ENCODE measurements at regions of chr5 and their contacts with region 1.

Region 1: GRCh38 chr5:159331093-159331973 is 1.0 kb upstream of the IL12B start:
- DNase-seq: peak; percentile 72
- ATAC-seq: peak; percentile 48
- H3K4me3 Mint-ChIP-seq: peak overlapping the region; percentile 80
- H3K27ac Mint-ChIP-seq: peak overlapping the region; percentile 90
- H3K4me1 Mint-ChIP-seq: peaks cover 61% of the 10 kb centered on the region
- H3K27me3 Mint-ChIP-seq: no peaks in the 10 kb centered on the region
- CTCF ChIP-seq: no peak

Region 2: DNA sequence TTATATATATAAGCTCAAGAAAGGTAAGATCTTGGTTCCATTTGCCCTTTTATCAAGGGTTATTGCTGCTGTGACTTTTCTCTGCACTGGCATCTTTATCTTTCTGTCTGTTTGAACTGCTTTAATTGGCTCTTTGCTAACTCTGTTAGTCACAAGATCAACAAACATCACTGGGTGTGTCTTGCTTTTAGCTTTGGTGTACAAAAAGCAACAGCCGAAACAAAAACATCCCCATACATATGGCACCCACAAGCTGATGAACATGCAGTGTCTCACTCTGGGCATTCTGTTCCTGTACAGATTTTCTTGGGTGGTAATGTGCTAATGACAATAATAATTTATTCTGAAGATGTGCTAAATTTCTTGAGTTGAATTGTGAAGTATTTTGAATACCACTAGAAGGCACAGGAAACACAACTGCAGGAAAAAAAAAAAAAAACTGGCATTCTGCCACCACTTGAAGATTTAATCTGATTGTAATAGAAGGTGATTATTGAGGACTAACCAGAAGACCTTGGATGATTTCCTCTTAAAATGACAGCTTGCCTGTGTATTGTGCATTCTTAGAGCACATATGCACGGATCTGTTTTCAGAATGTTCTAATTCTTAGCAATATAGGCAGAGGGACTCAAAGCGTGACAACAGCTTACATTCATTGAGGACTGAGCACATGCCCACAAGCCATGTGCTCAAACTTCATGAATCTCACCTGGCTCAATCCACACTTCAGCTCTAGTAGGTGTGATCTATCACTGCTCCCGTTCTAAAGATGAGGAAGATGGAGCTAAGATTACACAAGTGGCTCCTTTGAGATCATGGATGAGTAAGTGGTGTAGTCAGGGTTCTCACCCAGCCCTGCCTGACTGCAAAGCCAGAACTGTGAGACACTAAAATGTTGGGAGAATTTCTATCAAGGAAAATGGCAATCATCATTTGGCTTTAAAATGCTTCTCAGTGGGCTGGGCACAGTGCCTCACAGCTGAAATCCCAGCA is 328.0 kb before region 1 on chr5:
- CTCF ChIA-PET with region 1: no interaction called
- POLR2A ChIA-PET with region 1: no interaction called
- intact Hi-C with region 1: no loop called
- DNase-seq: no peak
- ATAC-seq: no peak
- H3K4me3 Mint-ChIP-seq: peak overlapping the region; percentile 12
- H3K27ac Mint-ChIP-seq: peak overlapping the region; percentile 59
- H3K4me1 Mint-ChIP-seq: peaks cover 79% of the 10 kb centered on the region
- H3K27me3 Mint-ChIP-seq: no peaks in the 10 kb centered on the region
- CTCF ChIP-seq: no peak

Region 3: GRCh38 chr5:159209438-159210305 is 121.7 kb before region 1 on chr5 and contains the start of gene RNF145:
- CTCF ChIA-PET with region 1: no interaction called
- POLR2A ChIA-PET with region 1: no interaction called
- intact Hi-C with region 1: loop called (anchors 5 kb)
- DNase-seq: peak; percentile 93
- ATAC-seq: peak; percentile 79
- H3K4me3 Mint-ChIP-seq: peak within 1 kb of the TSS; percentile 97
- H3K27ac Mint-ChIP-seq: peak within 1 kb of the TSS; percentile 96
- H3K4me1 Mint-ChIP-seq: peaks cover 57% of the 10 kb centered on the region
- H3K27me3 Mint-ChIP-seq: no peaks in the 10 kb centered on the region
- CTCF ChIP-seq: no peak
- total RNA-seq, gene RNF145: 66.1 and 79.1 TPM in 2 replicates

Region 4: DNA sequence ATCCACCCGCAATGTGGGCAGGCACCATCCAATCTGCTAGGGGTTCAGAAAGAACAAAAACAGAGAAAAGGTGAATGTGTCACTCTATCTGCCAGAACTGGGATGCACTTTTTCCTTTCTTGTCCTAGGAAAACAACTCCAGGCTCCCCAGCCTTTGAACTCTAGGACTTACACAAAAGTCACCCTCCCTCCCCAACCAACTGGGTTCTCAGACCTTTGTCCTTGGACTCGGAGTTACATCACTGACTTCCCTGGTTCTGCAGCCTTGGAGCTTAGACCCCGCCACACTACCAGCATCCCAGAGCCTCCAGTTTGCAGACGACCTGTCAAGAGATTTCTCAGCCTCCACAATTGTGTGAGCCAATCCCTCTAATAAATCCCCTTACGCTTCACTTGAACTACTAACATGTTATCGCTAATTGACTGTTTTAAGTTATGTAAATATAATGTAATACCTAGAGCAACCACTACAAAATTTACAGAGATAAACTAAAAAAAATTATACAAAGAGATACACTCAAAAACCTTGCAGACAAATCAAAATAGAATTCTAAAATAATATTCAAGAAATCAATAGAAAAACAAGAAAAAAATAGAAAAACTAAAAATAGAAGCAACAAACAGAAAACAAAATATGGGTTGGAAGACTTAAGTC is 73.6 kb before region 1 on chr5:
- CTCF ChIA-PET with region 1: no interaction called
- POLR2A ChIA-PET with region 1: no interaction called
- intact Hi-C with region 1: no loop called
- DNase-seq: no peak
- ATAC-seq: no peak
- H3K4me3 Mint-ChIP-seq: no peak overlapping the region
- H3K27ac Mint-ChIP-seq: no peak overlapping the region
- H3K4me1 Mint-ChIP-seq: peaks cover 11% of the 10 kb centered on the region
- H3K27me3 Mint-ChIP-seq: peaks cover 14% of the 10 kb centered on the region
- CTCF ChIP-seq: no peak

Region 5: DNA sequence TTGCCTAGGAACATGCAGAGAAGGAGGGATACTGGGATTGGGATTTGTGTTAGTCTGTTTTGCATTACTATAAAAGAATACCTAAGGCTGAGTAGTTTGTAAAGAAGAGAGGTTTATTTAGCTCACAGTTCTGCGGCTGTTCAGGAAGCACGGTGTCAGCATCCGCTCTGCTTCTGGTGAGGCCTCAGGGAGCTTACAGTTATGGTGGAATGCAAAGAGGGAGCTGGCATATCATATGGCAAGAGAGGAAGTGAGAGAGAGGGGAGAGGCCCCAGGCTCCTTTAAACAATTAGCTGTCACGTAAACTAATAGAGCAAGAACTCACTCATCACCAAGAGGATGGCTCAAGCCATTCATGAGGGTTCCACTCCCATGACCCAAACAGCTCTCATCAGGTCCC is 28.0 kb before region 1 on chr5:
- CTCF ChIA-PET with region 1: interaction called, 3 read pairs
- POLR2A ChIA-PET with region 1: no interaction called
- intact Hi-C with region 1: loop called (anchors 2 kb)
- DNase-seq: no peak
- ATAC-seq: no peak
- H3K4me3 Mint-ChIP-seq: no peak overlapping the region
- H3K27ac Mint-ChIP-seq: no peak overlapping the region
- H3K4me1 Mint-ChIP-seq: peaks cover 18% of the 10 kb centered on the region
- H3K27me3 Mint-ChIP-seq: no peaks in the 10 kb centered on the region
- CTCF ChIP-seq: no peak

Region 6: DNA sequence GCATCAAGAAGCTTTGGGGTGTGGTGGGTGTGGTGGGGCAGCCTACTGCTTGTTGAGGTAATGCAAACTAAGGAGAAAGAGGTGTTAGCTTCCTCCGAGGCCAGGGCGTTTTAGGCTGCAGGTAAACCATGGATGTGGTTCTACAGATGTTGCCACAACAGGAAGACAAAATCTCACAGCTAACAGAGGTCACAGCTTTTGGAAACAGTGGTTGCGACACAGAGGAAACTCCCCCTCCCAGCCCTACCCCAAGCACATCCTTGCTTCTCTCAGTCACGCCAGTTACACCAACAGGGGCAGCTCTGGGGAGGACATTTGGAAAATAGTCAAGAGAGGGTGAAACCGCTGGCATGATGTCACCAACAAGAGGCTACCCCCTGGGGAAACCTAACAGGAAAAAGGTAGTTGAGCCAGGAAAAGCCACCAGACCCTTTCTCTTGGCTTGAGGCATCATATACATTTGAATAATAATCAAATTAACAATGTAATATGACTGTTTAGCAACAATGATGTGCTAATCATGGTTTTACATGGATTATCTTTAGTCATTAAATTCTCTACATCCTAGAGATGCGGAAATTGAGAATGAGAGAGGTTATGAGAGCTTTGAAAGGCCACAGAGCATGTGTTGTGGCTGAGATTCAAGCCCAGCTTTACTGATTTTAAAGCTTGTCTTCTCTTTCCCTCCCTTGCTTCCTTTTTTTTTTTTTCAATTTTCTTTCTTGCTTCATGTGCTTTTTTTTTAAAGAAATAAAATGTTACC is 81.1 kb after region 1 on chr5:
- CTCF ChIA-PET with region 1: interaction called, 3 read pairs
- POLR2A ChIA-PET with region 1: interaction called, 8 read pairs
- intact Hi-C with region 1: loop called (anchors 1 kb)
- DNase-seq: no peak
- ATAC-seq: peak; percentile 72
- H3K4me3 Mint-ChIP-seq: no peak overlapping the region
- H3K27ac Mint-ChIP-seq: peak overlapping the region; percentile 84
- H3K4me1 Mint-ChIP-seq: peaks cover 50% of the 10 kb centered on the region
- H3K27me3 Mint-ChIP-seq: no peaks in the 10 kb centered on the region
- CTCF ChIP-seq: no peak

Region 7: DNA sequence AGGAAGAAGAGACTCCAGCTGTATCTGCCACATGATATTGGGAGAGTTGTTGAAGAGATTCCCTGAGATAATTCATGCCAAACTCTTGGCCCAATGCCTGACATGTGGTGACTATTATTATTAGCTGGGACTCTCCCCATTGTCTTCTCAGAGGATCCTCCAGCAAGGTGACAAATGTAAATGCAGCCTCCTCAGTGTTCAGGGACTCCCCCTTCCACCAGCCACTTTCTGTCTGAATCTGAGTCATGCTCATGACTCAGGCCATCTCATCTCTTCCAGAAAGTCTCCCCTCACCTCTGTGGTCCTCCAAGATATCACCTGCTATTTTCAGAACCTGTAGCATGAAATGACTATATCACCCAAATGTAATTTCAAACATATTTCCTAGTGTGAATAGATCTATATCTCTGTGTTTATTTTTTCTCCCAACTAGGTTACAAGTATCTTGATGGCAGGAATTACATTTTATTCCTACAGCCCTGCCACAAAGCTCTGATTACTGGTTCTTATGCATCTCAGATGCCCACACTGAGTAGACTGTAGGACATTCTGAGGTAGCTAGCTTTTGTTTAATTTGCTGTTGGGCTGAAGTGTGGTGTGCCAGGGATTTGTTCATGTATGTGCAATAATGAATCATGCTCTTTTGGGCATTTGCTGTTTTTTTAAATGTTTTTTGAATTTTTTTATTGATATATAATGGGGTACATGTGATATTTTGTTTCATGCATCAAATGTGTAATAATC is 125.6 kb after region 1 on chr5:
- CTCF ChIA-PET with region 1: interaction called, 7 read pairs
- POLR2A ChIA-PET with region 1: interaction called, 7 read pairs
- intact Hi-C with region 1: loop called (anchors 1 kb)
- DNase-seq: no peak
- ATAC-seq: peak; percentile 66
- H3K4me3 Mint-ChIP-seq: peak overlapping the region; percentile 35
- H3K27ac Mint-ChIP-seq: peak overlapping the region; percentile 76
- H3K4me1 Mint-ChIP-seq: peaks cover 72% of the 10 kb centered on the region
- H3K27me3 Mint-ChIP-seq: no peaks in the 10 kb centered on the region
- CTCF ChIP-seq: no peak

Region 8: DNA sequence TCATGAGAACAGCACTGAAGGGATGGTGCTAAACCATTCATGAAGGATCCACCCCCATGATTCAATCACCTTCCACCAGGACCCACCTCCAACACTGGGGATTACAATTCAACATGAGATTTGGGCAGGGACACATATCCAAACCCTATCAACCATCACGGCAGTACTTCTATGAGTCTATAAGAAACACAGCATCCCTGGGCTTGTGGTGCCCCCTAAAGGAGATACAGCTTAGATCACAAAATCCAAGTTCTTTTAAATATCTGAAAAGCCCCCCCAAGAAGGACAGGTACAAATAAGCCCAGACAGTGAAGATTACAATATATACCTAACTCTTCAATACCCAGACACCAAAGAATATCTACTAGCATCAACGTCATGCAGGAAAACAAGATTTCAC is 351.3 kb after region 1 on chr5:
- CTCF ChIA-PET with region 1: no interaction called
- POLR2A ChIA-PET with region 1: no interaction called
- intact Hi-C with region 1: no loop called
- DNase-seq: no peak
- ATAC-seq: no peak
- H3K4me3 Mint-ChIP-seq: no peak overlapping the region
- H3K27ac Mint-ChIP-seq: no peak overlapping the region
- H3K4me1 Mint-ChIP-seq: peaks cover 4% of the 10 kb centered on the region
- H3K27me3 Mint-ChIP-seq: peaks cover 9% of the 10 kb centered on the region
- CTCF ChIP-seq: no peak

Region 9: DNA sequence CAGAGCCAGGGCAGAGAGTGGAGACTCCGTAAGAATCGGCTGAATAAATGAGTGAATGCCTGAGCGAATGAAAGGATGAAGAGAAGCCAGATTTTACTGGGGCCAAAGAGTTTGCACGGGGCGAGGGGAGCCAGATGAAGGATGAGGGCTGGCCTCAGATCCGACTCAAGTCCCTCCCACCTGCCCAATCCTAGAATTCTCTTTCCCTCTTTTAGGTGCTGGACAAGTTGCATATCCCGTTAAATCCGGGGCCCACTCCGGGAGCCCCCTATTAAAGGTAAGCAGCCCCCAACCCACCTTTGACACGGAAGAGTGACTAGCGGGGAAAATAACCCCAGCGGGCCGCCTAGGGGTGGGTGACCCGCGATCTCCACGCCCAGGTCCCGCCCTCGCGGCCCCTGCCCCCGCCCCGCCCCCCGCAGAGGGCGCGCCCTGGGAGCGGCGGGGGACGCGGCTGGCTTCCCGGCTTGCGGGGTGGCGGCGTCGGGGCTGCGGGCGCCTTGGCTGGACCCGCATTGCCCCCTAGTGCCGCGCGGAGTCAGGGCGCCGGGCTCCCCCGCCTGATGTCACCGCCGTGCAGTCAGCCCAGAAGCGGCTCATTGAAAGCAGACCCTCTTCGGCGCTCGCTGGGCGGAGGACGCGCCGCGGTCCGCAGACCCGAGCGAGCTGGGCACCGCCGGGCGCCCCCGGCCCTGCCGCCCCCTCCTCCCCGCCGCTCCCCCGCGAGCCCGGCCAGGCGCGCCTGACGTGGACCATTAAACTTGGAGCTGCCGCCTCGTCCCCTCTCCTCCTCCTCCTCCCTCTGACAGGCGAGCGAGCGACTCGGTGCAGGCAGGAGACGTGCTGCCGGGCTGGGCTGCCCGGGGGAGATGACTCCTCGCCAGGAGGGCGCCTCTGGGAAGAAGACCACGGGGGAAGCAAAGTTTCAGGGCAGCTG is 584.8 kb after region 1 on chr5 and contains the start of gene ADRA1B:
- CTCF ChIA-PET with region 1: no interaction called
- POLR2A ChIA-PET with region 1: no interaction called
- intact Hi-C with region 1: loop called (anchors 1 kb)
- DNase-seq: peak; percentile 55
- ATAC-seq: peak; percentile 96
- H3K4me3 Mint-ChIP-seq: peak within 1 kb of the TSS; percentile 57
- H3K27ac Mint-ChIP-seq: no peak within 1 kb of the TSS
- H3K4me1 Mint-ChIP-seq: peaks cover 14% of the 10 kb centered on the region
- H3K27me3 Mint-ChIP-seq: peaks cover 29% of the 10 kb centered on the region
- CTCF ChIP-seq: no peak
- total RNA-seq, gene ADRA1B: 0.49 and 0.53 TPM in 2 replicates

Region 10: GRCh38 chr5:160008877-160009590 is 677.7 kb after region 1 on chr5 and contains the start of gene TTC1:
- CTCF ChIA-PET with region 1: no interaction called
- POLR2A ChIA-PET with region 1: no interaction called
- intact Hi-C with region 1: loop called (anchors 5 kb)
- DNase-seq: peak; percentile 72
- ATAC-seq: peak; percentile 98
- H3K4me3 Mint-ChIP-seq: peak within 1 kb of the TSS; percentile 100
- H3K27ac Mint-ChIP-seq: peak within 1 kb of the TSS; percentile 98
- H3K4me1 Mint-ChIP-seq: peaks cover 31% of the 10 kb centered on the region
- H3K27me3 Mint-ChIP-seq: no peaks in the 10 kb centered on the region
- CTCF ChIP-seq: no peak
- total RNA-seq, gene TTC1: 59.9 and 65.0 TPM in 2 replicates

Measured in activated B cell treated with CpG ODN at 0.5 μM for 24 hours (primary cell).